Common myeloid progenitor, CD34-positive (primary cell): ENCODE measurements at regions of chr4 and their contacts with region 1.

Region 1: GRCh38 chr4:10715696-10716095 is 31.1 kb upstream of the CLNK start:
- DNase-seq: peak in 2 of 3 donors; percentile 32 to 54
- H3K4me3 ChIP-seq: no peak overlapping the region
- H3K27ac ChIP-seq: no peak overlapping the region
- H3K4me1 ChIP-seq: peaks cover 0 to 14% (median 8%) of the 10 kb centered on the region in 4 experiments
- H3K27me3 ChIP-seq: no peaks in the 10 kb centered on the region

Region 2: DNA sequence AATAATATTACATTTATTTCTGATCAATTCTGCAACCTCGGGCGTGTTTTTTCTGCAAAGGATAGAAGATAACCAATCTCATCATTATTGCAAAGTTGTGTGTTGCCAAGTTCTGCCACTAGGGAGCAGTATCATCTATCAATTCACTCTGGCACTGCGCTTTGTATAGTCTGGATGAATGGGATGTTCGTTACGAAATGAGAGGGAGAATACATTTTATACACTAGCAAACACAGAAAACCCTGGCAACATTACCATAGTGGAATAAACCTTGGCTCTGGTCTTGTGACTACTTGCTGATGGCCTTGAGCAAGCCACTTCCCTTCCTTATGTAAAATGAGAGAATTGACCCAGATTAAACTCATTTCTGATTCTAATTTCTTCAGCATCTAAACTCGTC is 161.0 kb before region 1 on chr4:
- CTCF ChIA-PET with region 1: interaction called, 10 read pairs
- POLR2A ChIA-PET with region 1: no interaction called
- DNase-seq: peak; percentile 63 to 83 (median 77)
- H3K4me3 ChIP-seq: peak overlapping the region in 2 of 7 experiments; percentile 8 to 23
- H3K27ac ChIP-seq: no peak overlapping the region
- H3K4me1 ChIP-seq: peaks cover 0 to 11% (median 0%) of the 10 kb centered on the region in 4 experiments
- H3K27me3 ChIP-seq: no peaks in the 10 kb centered on the region

Region 3: DNA sequence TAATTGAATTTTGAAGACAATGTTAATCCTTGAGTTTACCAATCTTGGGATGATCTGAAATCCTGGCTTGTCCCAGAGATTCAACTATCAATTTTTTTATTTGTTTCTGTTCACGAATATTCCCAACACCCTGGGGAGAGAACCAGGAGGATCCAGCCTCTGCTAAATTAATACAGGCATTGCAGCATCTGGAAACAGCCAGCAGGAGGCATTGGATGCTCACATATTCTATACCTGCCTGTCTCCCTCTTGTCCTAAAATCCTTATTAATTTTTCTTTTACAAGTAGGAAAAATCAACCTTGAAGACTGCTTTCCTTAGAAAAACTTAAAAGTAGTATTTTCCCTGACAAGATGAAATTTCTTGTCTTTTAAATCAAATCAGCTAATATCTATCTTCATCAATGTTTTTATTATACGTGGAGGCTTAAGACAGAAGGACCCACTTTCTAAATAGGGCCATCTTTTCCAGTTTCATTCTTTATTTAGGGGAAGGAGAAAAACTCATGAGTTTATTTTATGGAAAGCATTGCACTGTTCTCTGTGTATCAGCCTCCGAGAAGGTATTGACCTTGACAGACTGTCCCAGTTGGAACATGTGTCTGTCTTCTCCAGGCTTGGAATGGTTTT is 133.5 kb before region 1 on chr4:
- CTCF ChIA-PET with region 1: interaction called, 13 read pairs
- POLR2A ChIA-PET with region 1: no interaction called
- DNase-seq: peak; percentile 31 to 48 (median 32)
- H3K4me3 ChIP-seq: no peak overlapping the region
- H3K27ac ChIP-seq: no peak overlapping the region
- H3K4me1 ChIP-seq: peaks cover 0 to 18% (median 15%) of the 10 kb centered on the region in 4 experiments
- H3K27me3 ChIP-seq: no peaks in the 10 kb centered on the region

Region 4: DNA sequence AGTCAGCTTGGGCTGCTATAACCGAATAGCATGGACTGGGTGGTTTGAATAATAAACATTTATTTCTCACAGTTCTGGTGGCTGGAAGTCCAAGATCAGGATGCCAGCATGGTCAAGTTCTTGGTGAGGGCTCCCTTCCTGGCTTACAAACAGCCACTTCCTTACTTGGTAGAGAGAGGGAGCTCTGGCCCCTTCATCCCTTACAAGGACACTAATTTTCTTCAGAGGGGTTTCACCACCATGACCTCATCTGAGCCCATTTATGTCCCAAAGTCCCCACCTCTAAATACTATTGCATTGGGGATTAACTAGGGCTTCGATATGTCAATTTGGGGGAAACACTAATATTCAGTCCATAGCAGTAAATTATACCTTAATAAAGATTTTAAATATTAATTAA is 93.0 kb before region 1 on chr4:
- CTCF ChIA-PET with region 1: interaction called, 11 read pairs
- POLR2A ChIA-PET with region 1: no interaction called
- DNase-seq: peak; percentile 46 to 60 (median 59)
- H3K4me3 ChIP-seq: no peak overlapping the region
- H3K27ac ChIP-seq: no peak overlapping the region
- H3K4me1 ChIP-seq: peaks cover 0 to 13% (median 7%) of the 10 kb centered on the region in 4 experiments
- H3K27me3 ChIP-seq: no peaks in the 10 kb centered on the region